ENCODE measurements at regions of chr3 and their contacts with region 1.

Region 1: GRCh38 chr3:61894988-61895935 is 333.9 kb downstream of the PTPRG start:
- DNase-seq: peak; percentile 87
- ATAC-seq: peak; percentile 90
- H3K4me3 ChIP-seq: no peak overlapping the region
- H3K27ac ChIP-seq: no peak overlapping the region; the same call in 1 of the 2 replicates
- H3K4me1 ChIP-seq: peaks cover 5% of the 10 kb centered on the region; the same call in 1 of the 2 replicates
- H3K27me3 ChIP-seq: no peaks in the 10 kb centered on the region
- CTCF ChIP-seq: peak in 1 of 3 experiments; percentile 21; a peak in 1 of 6 replicates
- EP300 ChIP-seq: peak; percentile 62 to 92
- POLR2A ChIP-seq: no peak
- RAD21 ChIP-seq: no peak; the same call in 1 of the 2 replicates

Region 2: DNA sequence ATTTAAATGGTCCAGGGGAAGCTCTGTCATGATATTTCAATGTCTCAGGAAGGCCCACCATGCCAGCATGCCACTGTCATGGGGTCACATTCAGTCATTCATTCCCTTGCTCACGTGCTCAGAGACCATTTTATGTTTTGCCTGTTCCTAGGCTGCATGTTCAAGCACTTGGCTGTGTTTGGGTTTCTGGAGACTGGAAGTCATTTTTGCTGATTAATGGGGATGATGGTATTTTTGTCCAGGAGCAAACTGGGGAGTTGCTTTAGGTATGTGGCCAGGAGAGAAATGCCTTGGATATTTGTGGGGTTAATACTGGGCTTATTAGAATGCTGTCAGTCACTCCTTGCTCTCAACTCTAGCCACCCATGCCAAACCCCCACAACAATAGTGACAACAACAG is 30.4 kb before region 1 on chr3:
- CTCF ChIA-PET with region 1: interaction called, 6 read pairs
- POLR2A ChIA-PET with region 1: interaction called, 4 read pairs
- RAD21 ChIA-PET with region 1: interaction called, 8 read pairs
- SMC1A ChIA-PET with region 1: interaction called, 14 read pairs
- in situ Hi-C with region 1: no loop called
- intact Hi-C with region 1: no loop called
- DNase-seq: no peak
- ATAC-seq: no peak
- H3K4me3 ChIP-seq: no peak overlapping the region
- H3K27ac ChIP-seq: no peak overlapping the region
- H3K4me1 ChIP-seq: no peaks in the 10 kb centered on the region
- H3K27me3 ChIP-seq: no peaks in the 10 kb centered on the region
- CTCF ChIP-seq: no peak
- EP300 ChIP-seq: no peak
- POLR2A ChIP-seq: no peak
- RAD21 ChIP-seq: no peak

Region 3: GRCh38 chr3:61872077-61872706 is 23.1 kb before region 1 on chr3:
- CTCF ChIA-PET with region 1: interaction called, 8 read pairs
- POLR2A ChIA-PET with region 1: interaction called, 17 read pairs
- RAD21 ChIA-PET with region 1: interaction called, 19 read pairs
- SMC1A ChIA-PET with region 1: interaction called, 42 read pairs
- in situ Hi-C with region 1: no loop called
- intact Hi-C with region 1: no loop called
- DNase-seq: no peak
- ATAC-seq: no peak
- H3K4me3 ChIP-seq: no peak overlapping the region
- H3K27ac ChIP-seq: no peak overlapping the region
- H3K4me1 ChIP-seq: no peaks in the 10 kb centered on the region
- H3K27me3 ChIP-seq: no peaks in the 10 kb centered on the region
- CTCF ChIP-seq: no peak
- EP300 ChIP-seq: no peak
- POLR2A ChIP-seq: no peak
- RAD21 ChIP-seq: no peak

Region 4: GRCh38 chr3:61877348-61878138 is 17.7 kb before region 1 on chr3:
- CTCF ChIA-PET with region 1: interaction called, 8 read pairs
- POLR2A ChIA-PET with region 1: interaction called, 17 read pairs
- RAD21 ChIA-PET with region 1: interaction called, 19 read pairs
- SMC1A ChIA-PET with region 1: interaction called, 42 read pairs
- in situ Hi-C with region 1: no loop called
- intact Hi-C with region 1: no loop called
- DNase-seq: peak; percentile 17
- ATAC-seq: peak; percentile 88
- H3K4me3 ChIP-seq: no peak overlapping the region
- H3K27ac ChIP-seq: no peak overlapping the region
- H3K4me1 ChIP-seq: no peaks in the 10 kb centered on the region
- H3K27me3 ChIP-seq: no peaks in the 10 kb centered on the region; a peak in 2 of 4 replicates
- CTCF ChIP-seq: no peak; a peak in 1 of 6 replicates
- EP300 ChIP-seq: peak in 1 of 2 experiments; percentile 30; a peak in 1 of 4 replicates
- POLR2A ChIP-seq: no peak
- RAD21 ChIP-seq: no peak

Region 5: DNA sequence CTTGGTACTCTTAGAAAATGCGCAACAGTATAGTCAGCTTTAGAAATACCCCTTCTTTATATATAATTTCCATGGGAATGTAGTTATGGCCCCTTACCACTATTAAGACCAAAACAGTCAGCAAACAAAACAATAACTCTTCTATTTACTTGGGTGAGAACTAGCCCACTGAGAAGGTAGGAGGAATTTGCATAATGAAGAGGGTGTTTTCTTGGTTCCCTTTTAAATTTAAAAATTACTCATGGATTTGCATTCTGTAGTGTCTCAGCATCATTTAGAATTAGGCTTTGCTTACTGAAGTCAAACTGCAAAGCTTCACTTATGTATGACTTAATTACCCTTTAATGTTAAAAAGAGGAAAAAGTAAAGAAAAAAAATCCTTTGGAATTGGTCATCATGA is 16.9 kb after region 1 on chr3:
- CTCF ChIA-PET with region 1: interaction called, 4 read pairs
- POLR2A ChIA-PET with region 1: interaction called, 5 read pairs
- RAD21 ChIA-PET with region 1: interaction called, 26 read pairs
- SMC1A ChIA-PET with region 1: interaction called, 63 read pairs
- in situ Hi-C with region 1: no loop called
- intact Hi-C with region 1: no loop called
- DNase-seq: no peak
- ATAC-seq: peak; percentile 73
- H3K4me3 ChIP-seq: no peak overlapping the region
- H3K27ac ChIP-seq: no peak overlapping the region
- H3K4me1 ChIP-seq: 0 out of 2 replicates have a peak, but pooled peaks cover 4% of the 10 kb centered on the region
- H3K27me3 ChIP-seq: 0 out of 4 replicates have a peak, but pooled peaks cover 0 to 2% of the 10 kb centered on the region in 2 experiments
- CTCF ChIP-seq: no peak
- EP300 ChIP-seq: peak in 1 of 2 experiments; percentile 72; a peak in 1 of 4 replicates
- POLR2A ChIP-seq: no peak
- RAD21 ChIP-seq: no peak

Region 6: GRCh38 chr3:61947456-61947855 is 52.2 kb after region 1 on chr3:
- CTCF ChIA-PET with region 1: interaction called, 3 read pairs
- POLR2A ChIA-PET with region 1: no interaction called
- RAD21 ChIA-PET with region 1: interaction called, 26 read pairs
- SMC1A ChIA-PET with region 1: interaction called, 12 read pairs
- in situ Hi-C with region 1: no loop called
- intact Hi-C with region 1: no loop called
- DNase-seq: no peak
- ATAC-seq: no peak
- H3K4me3 ChIP-seq: no peak overlapping the region
- H3K27ac ChIP-seq: no peak overlapping the region
- H3K4me1 ChIP-seq: no peaks in the 10 kb centered on the region
- H3K27me3 ChIP-seq: no peaks in the 10 kb centered on the region
- CTCF ChIP-seq: no peak
- EP300 ChIP-seq: no peak
- POLR2A ChIP-seq: no peak
- RAD21 ChIP-seq: no peak